PC-9 (cell line): ENCODE measurements at regions of chr1 and their contacts with region 1.

Region 1: DNA sequence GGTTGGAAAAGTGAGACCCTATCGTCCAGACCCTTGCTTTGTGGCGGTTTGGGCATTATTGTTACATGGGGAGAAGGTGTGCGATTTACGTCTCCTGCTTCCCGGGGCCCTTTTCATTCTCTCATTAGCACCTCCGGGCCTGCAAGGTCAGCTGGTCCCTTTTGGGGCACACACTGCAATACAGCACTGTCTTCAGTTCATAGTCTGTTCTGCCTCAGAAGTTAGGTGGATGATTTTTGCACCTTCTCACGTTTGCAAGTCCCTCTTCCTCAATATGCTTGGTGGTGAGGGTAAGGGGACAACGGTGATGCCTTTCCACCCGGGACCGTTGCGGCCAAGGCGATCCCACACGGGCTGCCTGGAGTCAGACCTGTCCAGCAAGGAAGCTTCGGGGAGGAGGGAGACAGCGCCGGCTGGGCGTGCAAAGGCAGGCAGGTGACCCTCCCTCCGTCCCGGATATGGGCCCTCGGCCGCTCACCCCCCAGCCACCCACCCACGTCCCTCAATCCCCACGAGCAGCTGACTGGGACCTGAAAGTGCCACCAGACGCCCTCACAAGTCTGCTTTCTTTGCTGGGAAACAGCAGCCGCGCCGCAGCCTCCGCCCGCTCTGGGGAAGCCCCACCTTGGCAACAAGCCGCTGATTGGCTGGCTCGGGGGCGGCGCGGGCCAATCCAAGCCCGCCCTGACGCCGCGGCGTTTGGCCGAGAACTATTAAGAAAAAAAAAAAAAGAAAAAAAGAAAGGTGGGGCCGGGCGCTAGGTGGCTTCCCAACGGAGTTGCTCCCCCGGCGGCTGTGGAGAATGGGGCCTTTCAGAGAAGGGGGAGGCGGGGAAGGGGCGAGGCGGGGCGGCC is 21.7 kb downstream of the BTG2 start:
- DNase-seq: peak; percentile 77 to 94
- H3K4me3 ChIP-seq: peak overlapping the region; percentile 63
- H3K27ac ChIP-seq: peak overlapping the region; percentile 61
- H3K4me1 ChIP-seq: peaks cover 22% of the 10 kb centered on the region
- H3K27me3 ChIP-seq: peaks cover 17% of the 10 kb centered on the region; the same call in 1 of the 2 replicates
- CTCF ChIP-seq: no peak

Region 2: GRCh38 chr1:204314171-204314895 is 987.3 kb after region 1 on chr1:
- CTCF ChIA-PET with region 1: interaction called, 10 read pairs
- POLR2A ChIA-PET with region 1: no interaction called
- intact Hi-C with region 1: no loop called
- DNase-seq: peak in 1 of 2 experiments; percentile 49
- H3K4me3 ChIP-seq: peak overlapping the region; percentile 23; the same call in 1 of the 2 replicates
- H3K27ac ChIP-seq: peak overlapping the region; percentile 60; the same call in 1 of the 2 replicates
- H3K4me1 ChIP-seq: peaks cover 45% of the 10 kb centered on the region
- H3K27me3 ChIP-seq: no peaks in the 10 kb centered on the region
- CTCF ChIP-seq: no peak